Naive thymus-derived CD4-positive, alpha-beta T cell (primary cell): ENCODE measurements at regions of chr21 and their contacts with region 1.

Region 1: DNA sequence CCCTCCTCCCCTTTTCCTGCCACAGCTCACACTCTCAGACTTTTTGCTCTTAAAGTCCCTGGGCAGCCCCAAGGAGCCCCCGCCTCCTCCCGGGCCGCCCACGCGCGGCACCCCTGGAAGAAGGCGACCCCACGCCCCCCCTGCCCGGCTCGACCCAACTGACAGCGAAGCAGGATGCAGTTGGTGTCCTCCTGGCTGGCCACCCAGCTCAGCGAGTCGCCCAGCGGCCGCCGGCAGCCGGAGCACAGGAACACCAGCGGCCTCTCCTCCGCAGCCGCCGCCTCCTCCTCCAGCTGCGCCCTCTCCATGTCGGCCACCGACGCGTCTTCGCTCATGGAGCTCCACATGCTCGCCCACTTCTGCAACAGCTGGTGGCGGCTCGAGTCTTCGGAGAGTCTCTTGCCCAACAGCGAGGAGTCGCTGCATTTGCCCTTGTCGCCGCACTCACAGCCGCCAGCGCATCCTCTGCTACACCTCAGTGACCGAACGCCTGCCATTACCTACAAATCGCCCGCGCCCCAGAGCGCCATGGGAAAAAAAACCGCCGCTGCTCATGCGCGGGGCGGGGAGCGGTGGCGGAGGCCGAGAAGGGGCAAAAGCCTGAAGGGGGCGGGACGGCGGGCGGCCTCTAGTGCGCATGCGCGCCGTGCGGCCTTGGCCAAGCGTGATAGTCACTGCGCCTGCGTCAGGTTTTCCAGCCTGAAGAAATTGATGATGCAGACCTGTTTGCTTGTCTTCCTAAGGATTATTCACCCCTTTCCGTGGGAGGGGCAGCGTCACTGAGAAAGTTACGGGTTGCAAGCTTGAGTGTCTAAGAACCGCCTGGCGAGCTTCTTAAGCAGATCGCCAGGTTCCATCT is at the start of gene MIS18A:
- DNase-seq: peak; percentile 92 to 98 (median 95)
- ATAC-seq: peak; percentile 97
- H3K4me3 ChIP-seq: peak within 1 kb of the TSS; percentile 90
- H3K4me3 Mint-ChIP-seq: peak within 1 kb of the TSS; percentile 95 to 100 (median 98)
- H3K27ac ChIP-seq: peak within 1 kb of the TSS; percentile 70
- H3K27ac Mint-ChIP-seq: peak within 1 kb of the TSS; percentile 90 to 97 (median 94)
- H3K4me1 ChIP-seq: peaks cover 14 to 16% of the 10 kb centered on the region in 2 donors
- H3K4me1 Mint-ChIP-seq: peaks cover 8 to 36% (median 33%) of the 10 kb centered on the region in 7 donors
- H3K27me3 ChIP-seq: no peaks in the 10 kb centered on the region
- H3K27me3 Mint-ChIP-seq: no peaks in the 10 kb centered on the region
- total RNA-seq, gene MIS18A: 3.3 to 16.4 (median 8.4) TPM

Region 2: DNA sequence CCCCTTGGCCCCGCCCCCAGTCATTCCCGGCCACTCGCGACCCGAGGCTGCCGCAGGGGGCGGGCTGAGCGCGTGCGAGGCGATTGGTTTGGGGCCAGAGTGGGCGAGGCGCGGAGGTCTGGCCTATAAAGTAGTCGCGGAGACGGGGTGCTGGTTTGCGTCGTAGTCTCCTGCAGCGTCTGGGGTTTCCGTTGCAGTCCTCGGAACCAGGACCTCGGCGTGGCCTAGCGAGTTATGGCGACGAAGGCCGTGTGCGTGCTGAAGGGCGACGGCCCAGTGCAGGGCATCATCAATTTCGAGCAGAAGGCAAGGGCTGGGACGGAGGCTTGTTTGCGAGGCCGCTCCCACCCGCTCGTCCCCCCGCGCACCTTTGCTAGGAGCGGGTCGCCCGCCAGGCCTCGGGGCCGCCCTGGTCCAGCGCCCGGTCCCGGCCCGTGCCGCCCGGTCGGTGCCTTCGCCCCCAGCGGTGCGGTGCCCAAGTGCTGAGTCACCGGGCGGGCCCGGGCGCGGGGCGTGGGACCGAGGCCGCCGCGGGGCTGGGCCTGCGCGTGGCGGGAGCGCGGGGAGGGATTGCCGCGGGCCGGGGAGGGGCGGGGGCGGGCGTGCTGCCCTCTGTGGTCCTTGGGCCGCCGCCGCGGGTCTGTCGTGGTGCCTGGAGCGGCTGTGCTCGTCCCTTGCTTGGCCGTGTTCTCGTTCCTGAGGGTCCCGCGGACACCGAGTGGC is 619.0 kb before region 1 on chr21 and contains the start of gene SOD1:
- CTCF ChIA-PET with region 1: no interaction called
- POLR2A ChIA-PET with region 1: no interaction called
- intact Hi-C with region 1: loop called in 1 of 2 experiments (anchors 1 kb)
- DNase-seq: peak in 8 of 9 donors; percentile 20 to 98 (median 97)
- ATAC-seq: peak; percentile 97
- H3K4me3 ChIP-seq: peak within 1 kb of the TSS; percentile 79
- H3K4me3 Mint-ChIP-seq: peak within 1 kb of the TSS; percentile 95 to 100 (median 100)
- H3K27ac ChIP-seq: peak within 1 kb of the TSS; percentile 88
- H3K27ac Mint-ChIP-seq: peak within 1 kb of the TSS; percentile 97 to 100 (median 98)
- H3K4me1 ChIP-seq: peaks cover 15 to 50% of the 10 kb centered on the region in 2 donors
- H3K4me1 Mint-ChIP-seq: peaks cover 40 to 80% (median 68%) of the 10 kb centered on the region in 7 donors
- H3K27me3 ChIP-seq: no peaks in the 10 kb centered on the region
- H3K27me3 Mint-ChIP-seq: no peaks in the 10 kb centered on the region
- total RNA-seq, gene SOD1: 110 to 218 (median 182) TPM

Region 3: GRCh38 chr21:32253215-32253641 is 25.5 kb before region 1 on chr21:
- CTCF ChIA-PET with region 1: no interaction called
- POLR2A ChIA-PET with region 1: no interaction called
- intact Hi-C with region 1: no loop called
- DNase-seq: no peak
- ATAC-seq: no peak
- H3K4me3 ChIP-seq: no peak overlapping the region
- H3K4me3 Mint-ChIP-seq: no peak overlapping the region
- H3K27ac ChIP-seq: no peak overlapping the region
- H3K27ac Mint-ChIP-seq: no peak overlapping the region
- H3K4me1 ChIP-seq: no peaks in the 10 kb centered on the region
- H3K4me1 Mint-ChIP-seq: no peaks in the 10 kb centered on the region
- H3K27me3 ChIP-seq: no peaks in the 10 kb centered on the region
- H3K27me3 Mint-ChIP-seq: peaks cover 5 to 35% (median 29%) of the 10 kb centered on the region in 5 donors

Region 4: DNA sequence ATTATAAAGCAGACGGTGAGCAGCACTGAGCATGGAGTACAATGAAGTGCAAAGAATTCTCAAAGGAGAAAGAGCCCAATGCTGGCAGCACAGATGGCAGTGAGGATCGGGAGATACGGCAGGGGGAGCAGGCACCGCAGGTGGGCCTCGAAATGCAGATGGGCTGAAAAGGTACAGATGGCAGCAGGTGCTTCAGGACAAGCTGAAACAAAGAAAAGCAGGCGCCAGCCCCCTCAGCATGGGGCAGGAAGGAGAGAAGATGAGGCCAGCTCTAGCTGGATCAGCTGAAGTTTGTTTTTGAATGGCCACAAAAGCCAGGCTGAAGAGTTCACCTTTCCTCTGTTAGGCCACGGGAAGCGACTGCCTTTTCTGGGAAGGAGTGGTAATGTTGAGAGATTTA is 325.7 kb after region 1 on chr21:
- CTCF ChIA-PET with region 1: no interaction called
- POLR2A ChIA-PET with region 1: no interaction called
- intact Hi-C with region 1: loop called in 1 of 2 experiments (anchors 5 kb)
- DNase-seq: no peak
- ATAC-seq: no peak
- H3K4me3 ChIP-seq: no peak overlapping the region
- H3K4me3 Mint-ChIP-seq: no peak overlapping the region
- H3K27ac ChIP-seq: no peak overlapping the region
- H3K27ac Mint-ChIP-seq: peak overlapping the region in 1 of 9 donors; percentile 21
- H3K4me1 ChIP-seq: no peaks in the 10 kb centered on the region
- H3K4me1 Mint-ChIP-seq: peaks cover 2 to 25% (median 15%) of the 10 kb centered on the region in 7 donors
- H3K27me3 ChIP-seq: no peaks in the 10 kb centered on the region
- H3K27me3 Mint-ChIP-seq: no peaks in the 10 kb centered on the region